Left colon (tissue), 2 donors: ENCODE measurements at regions of chr14 and their contacts with region 1.

Region 1: DNA sequence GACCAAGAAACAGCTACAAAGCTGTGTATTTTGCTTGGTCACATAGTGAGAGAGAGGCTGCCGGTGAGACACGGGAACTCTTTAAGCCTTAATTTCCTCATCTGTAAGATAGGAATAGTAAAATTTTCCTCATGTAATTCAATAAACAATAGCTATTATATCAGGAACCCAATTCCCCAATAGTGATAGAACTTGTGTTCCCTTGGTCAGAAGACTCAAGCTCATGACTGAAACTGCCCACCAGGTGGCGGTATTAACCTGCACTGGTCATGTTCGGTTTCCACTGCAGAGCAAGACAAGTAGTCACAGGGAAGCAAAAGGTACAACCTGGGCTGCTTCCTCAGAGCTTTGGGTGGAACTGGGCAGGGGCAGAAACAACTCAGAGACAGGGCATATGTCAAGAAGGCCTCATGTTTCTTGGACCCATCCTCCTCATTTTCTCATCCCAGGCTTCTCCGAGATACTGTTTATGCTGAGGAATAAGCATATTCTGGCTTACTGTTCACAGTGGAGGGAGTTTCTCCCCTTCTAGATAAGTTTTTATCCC is 4.2 kb upstream of the AJUBA start:
- DNase-seq: peak; percentile 83 to 92
- ATAC-seq: peak; percentile 60

Region 2: DNA sequence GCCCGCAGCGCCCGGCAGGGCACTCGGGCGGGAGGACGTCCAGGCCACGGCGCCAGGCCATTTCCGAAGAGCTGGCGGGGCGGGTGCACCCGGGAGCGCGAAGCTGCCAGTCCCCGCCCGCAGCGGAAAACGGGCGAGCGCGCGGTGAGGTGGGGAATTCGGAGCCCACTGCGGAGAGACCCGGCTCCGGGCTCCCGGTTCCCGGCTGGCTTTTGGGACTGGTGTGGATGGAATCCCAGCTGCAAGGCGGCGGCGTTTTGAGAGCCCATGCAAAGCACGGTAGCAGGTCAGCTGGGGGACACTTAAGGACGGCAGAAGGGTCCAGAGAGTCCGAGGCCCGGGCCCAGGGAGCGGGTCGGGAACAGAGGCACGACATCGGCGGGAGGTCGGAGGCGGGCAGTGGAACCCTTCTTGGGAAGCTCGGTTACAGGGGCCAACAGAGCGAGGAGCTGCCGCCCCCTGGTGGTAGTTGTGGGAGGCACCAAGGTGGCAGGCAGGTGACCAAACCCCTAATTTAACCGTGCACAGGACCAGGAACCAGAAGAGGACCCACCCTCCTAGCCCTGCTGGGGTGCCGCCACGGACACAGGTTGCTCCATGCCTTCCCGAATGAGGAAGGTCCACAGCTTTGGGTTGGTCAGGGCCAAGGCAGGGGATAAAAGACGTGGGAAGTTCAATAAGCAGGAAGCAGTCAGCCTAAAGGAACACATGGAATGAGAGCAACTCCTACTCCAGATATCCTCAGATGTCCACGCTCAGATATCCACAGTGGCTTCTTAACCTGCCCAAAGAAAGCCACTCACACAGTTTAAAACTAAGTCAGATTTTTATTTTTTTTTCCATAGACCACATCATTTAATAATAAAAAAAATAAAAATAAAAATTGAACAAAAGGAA is 71.4 kb after region 1 on chr14:
- intact Hi-C with region 1: loop called (anchors 2 to 5 kb)
- DNase-seq: peak; percentile 82 to 92
- ATAC-seq: peak; percentile 80

Region 3: DNA sequence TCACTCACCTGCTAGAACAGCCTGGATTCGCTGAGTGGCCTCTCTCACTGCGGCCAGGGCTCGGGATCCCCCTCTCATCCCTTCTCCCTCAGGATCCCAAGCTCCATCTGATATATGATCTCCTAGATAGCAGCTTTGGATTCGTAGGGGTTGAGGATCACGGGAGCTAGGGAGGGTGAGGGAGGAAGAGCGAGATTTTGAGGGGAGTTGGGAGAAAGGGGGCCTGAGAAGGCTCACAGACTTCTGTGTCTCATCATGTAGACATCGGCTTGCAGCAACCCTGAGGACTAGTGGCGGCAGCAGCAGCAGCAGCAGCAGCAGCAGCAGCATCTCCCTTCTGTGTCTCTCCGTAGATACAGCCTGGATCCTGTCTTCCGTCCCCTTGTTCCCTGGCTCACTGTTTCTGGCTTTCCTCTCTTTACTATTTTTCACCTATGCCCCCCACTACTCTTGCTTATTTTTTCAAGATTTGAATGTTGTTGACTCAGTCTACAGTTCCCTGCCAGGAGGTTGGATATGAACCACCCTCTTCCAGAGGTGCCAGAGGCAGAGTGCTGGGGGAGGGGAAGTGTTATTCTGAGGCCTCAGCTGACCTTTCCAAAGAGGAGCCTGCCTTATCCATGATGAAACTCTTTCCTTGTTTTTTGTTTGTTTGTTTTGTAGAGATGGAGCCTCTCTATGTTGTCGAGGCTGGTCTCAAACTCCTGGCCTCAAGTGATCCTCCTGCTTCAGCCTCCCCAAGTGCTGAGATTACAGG is 118.2 kb after region 1 on chr14 and contains the start of gene CIROP:
- intact Hi-C with region 1: no loop called
- DNase-seq: no peak
- ATAC-seq: no peak
- total RNA-seq, gene CIROP: not detected